Posterior vena cava (tissue), 2 donors: ENCODE measurements at regions of chrX and their contacts with region 1.

Region 1: DNA sequence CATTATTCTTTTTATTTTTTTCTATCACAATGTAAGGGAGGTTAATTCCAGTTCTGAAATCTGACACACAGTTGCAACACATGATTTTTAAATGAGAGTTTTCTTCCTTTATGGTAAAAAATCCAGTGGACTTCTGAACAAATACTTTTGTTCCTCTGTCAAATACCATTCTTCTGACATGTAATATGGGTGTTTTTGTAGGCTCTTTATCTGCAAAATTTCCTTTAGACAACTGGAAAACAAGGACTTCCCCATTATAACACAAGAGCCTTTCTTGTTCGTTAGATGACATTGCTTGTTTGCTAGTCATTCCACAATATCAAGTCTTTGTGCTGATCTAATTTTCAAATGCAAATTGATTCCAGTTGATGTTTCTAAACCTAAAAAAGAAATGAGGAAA is 7.7 kb downstream of the FANCB start:
- DNase-seq: no peak

Region 2: DNA sequence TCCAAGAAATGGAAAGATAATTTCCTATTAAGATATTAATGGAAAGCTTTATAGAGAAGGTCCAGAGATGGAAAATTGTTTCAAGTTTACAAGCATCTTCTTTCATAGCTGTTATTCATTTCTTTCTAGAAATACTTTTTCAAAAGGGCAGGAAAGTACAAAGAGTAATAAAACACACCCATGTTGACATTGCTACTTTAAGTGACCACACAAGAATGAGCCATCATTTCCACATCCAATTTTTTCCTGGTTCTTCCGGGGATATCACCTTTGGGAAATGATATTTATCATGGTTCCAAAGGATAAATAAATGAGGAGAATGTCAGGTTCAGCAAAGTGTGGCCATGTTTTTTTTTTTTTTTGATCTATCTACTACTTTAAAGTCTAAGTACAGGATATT is 331.3 kb before region 1 on chrX:
- intact Hi-C with region 1: loop called in 1 of 2 experiments (anchors 5 kb)
- DNase-seq: no peak